GM12878 (cell line): ENCODE measurements at regions of chr18 and their contacts with region 1.

Region 1: GRCh38 chr18:54679318-54680149 is 88.5 kb downstream of the DYNAP start:
- DNase-seq: peak; percentile 9
- ATAC-seq: peak; percentile 69
- H3K4me3 ChIP-seq: no peak overlapping the region
- H3K27ac ChIP-seq: no peak overlapping the region
- H3K4me1 ChIP-seq: no peaks in the 10 kb centered on the region
- H3K27me3 ChIP-seq: 0 out of 4 replicates have a peak, but pooled peaks cover 0 to 3% of the 10 kb centered on the region in 2 experiments
- CTCF ChIP-seq: peak; percentile 12 to 43 (median 31); a peak in 5 of 6 replicates
- EP300 ChIP-seq: no peak
- POLR2A ChIP-seq: no peak
- RAD21 ChIP-seq: peak; percentile 72

Region 2: GRCh38 chr18:53567929-53568574 is 1111.5 kb before region 1 on chr18:
- CTCF ChIA-PET with region 1: no interaction called
- POLR2A ChIA-PET with region 1: no interaction called
- RAD21 ChIA-PET with region 1: no interaction called
- SMC1A ChIA-PET with region 1: no interaction called
- in situ Hi-C with region 1: no loop called
- intact Hi-C with region 1: loop called (anchors 10 kb)
- DNase-seq: no peak
- ATAC-seq: peak; percentile 52; the same call in 2 of the 3 replicates
- H3K4me3 ChIP-seq: no peak overlapping the region
- H3K27ac ChIP-seq: no peak overlapping the region
- H3K4me1 ChIP-seq: no peaks in the 10 kb centered on the region
- H3K27me3 ChIP-seq: no peaks in the 10 kb centered on the region
- CTCF ChIP-seq: peak; percentile 45 to 56 (median 49); a peak in 5 of 6 replicates
- EP300 ChIP-seq: no peak
- POLR2A ChIP-seq: no peak
- RAD21 ChIP-seq: peak; percentile 60

Region 3: DNA sequence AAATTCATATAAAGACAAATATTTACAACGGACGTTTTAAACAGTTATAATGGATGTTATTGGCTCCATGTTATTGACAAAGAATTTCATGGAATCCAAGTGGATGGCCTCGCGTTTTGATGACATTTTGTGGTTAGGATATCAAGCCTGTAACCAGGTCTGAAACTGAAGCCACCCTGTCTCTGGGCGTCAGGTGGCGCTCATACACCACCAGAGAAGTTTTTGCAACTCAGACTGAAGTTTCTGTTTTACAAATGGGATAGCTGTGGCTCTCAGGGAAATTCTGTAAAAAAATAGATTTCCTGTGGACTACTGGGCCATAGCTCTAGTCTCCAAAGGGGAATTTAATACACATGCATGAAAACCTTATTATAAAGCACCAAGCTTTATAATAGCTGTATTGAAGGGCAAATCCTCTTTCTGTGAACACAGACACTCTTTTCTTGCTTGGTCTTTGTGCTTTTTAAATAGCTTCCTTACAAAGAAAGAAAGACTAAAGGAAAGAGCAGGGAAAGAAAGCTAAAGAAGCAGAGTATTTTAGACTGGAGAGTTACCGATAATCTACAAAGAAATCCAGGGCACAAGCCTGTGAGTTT is 235.1 kb before region 1 on chr18:
- CTCF ChIA-PET with region 1: interaction called, 3 read pairs
- POLR2A ChIA-PET with region 1: no interaction called
- RAD21 ChIA-PET with region 1: no interaction called
- SMC1A ChIA-PET with region 1: no interaction called
- in situ Hi-C with region 1: loop called (anchors 10 kb)
- intact Hi-C with region 1: no loop called
- DNase-seq: no peak
- ATAC-seq: peak; percentile 86
- H3K4me3 ChIP-seq: no peak overlapping the region
- H3K27ac ChIP-seq: no peak overlapping the region
- H3K4me1 ChIP-seq: no peaks in the 10 kb centered on the region
- H3K27me3 ChIP-seq: peaks cover 0 to 3% of the 10 kb centered on the region in 2 experiments; a peak in 2 of 4 replicates
- CTCF ChIP-seq: peak; percentile 67 to 87 (median 76)
- EP300 ChIP-seq: no peak
- POLR2A ChIP-seq: no peak
- RAD21 ChIP-seq: peak; percentile 91

Region 4: GRCh38 chr18:55220523-55220922 is 541.0 kb after region 1 on chr18:
- CTCF ChIA-PET with region 1: no interaction called
- POLR2A ChIA-PET with region 1: no interaction called
- RAD21 ChIA-PET with region 1: no interaction called
- SMC1A ChIA-PET with region 1: no interaction called
- in situ Hi-C with region 1: no loop called
- intact Hi-C with region 1: loop called (anchors 5 kb)
- DNase-seq: peak; percentile 33
- ATAC-seq: peak; percentile 77
- H3K4me3 ChIP-seq: no peak overlapping the region
- H3K27ac ChIP-seq: no peak overlapping the region; the same call in 1 of the 2 replicates
- H3K4me1 ChIP-seq: peaks cover 14% of the 10 kb centered on the region
- H3K27me3 ChIP-seq: no peaks in the 10 kb centered on the region
- CTCF ChIP-seq: no peak
- EP300 ChIP-seq: no peak
- POLR2A ChIP-seq: no peak
- RAD21 ChIP-seq: no peak